Endothelial cell of umbilical vein (primary cell): ENCODE measurements at regions of chrX and their contacts with region 1.

Region 1: DNA sequence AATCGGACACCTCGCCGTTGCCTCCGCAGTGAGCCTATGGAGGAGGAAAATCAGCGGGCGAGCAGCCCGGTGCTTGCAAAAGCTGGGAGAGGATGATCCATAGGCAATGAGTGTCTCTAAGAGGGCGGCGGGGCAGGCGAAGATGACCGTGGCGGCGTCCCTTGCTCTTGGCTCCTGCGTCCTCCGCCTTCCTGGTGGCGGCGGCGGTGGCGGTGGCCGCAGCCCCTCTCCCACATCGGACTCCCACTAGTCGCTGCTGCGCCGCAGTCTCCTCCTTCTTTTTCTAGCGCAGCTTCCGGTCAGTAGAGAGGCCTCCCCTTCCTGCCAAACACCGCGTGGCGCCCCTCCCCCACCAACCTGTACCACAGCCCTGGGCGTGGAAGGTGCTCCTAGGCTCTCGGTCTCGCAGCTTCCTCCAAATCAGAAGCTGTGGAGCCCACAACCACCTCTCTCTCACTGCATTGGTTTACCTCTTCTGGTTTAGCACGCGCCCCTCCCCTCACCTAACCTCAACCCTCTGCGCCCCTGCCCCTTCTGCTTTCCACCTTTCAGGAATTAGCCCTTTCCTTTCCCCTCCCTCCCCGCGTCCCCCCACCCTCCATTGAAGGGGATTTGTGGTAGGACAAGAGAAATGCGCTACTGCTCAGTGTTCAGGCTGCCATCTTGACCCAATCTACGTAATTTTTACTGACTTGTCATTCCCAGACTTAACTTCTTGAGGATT is at the start of gene SPIN3:
- DNase-seq: peak; percentile 71
- H3K4me3 ChIP-seq: peak within 1 kb of the TSS; percentile 61 to 65 (median 62)
- H3K27ac ChIP-seq: no peak within 1 kb of the TSS
- H3K4me1 ChIP-seq: no peaks in the 10 kb centered on the region
- H3K27me3 ChIP-seq: no peaks in the 10 kb centered on the region
- CTCF ChIP-seq: no peak
- POLR2A ChIP-seq: peak; percentile 59
- total RNA-seq, gene SPIN3: 6.3 TPM in 2 replicates

Region 2: GRCh38 chrX:56744996-56745395 is 250.4 kb before region 1 on chrX:
- CTCF ChIA-PET with region 1: no interaction called
- POLR2A ChIA-PET with region 1: no interaction called
- dilution Hi-C with region 1: no loop called
- intact Hi-C with region 1: no loop called
- DNase-seq: peak; percentile 7
- H3K4me3 ChIP-seq: no peak overlapping the region
- H3K27ac ChIP-seq: no peak overlapping the region
- H3K4me1 ChIP-seq: no peaks in the 10 kb centered on the region
- H3K27me3 ChIP-seq: no peaks in the 10 kb centered on the region
- CTCF ChIP-seq: no peak
- POLR2A ChIP-seq: no peak

Region 3: DNA sequence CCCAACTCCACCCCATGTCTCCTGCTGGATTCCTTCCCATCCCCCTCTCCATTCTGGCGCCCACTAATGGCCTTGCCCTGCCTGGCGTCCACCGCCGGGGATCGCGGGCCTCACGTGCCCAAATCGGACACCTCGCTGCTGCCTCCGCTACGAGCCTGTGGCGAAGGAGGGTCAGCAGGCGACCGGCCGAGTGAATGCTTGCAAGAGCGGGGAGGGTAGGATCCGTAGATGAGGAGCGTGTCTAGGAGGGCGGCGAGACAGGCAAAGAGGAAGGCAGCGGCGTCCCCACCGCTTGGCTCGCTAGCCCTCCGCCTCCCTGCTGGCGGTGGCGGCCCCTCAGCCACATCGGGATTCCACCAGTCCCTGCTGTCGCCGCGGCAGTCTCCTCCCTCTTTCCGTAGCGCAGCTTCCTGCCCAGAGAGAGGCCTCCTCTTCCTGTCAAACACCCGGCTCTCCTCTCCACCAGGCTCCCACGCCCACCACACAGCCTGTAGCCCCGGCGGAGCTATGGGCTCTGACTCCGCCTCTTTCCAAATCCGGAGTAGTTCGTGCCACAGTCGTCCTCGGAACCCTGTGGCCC is 125.8 kb after region 1 on chrX and contains the start of gene SPIN2B:
- CTCF ChIA-PET with region 1: no interaction called
- POLR2A ChIA-PET with region 1: no interaction called
- dilution Hi-C with region 1: no loop called
- intact Hi-C with region 1: loop called (anchors 2 kb)
- DNase-seq: peak; percentile 85
- H3K4me3 ChIP-seq: peak within 1 kb of the TSS; percentile 55 to 76 (median 61)
- H3K27ac ChIP-seq: peak within 1 kb of the TSS; percentile 31
- H3K4me1 ChIP-seq: no peaks in the 10 kb centered on the region
- H3K27me3 ChIP-seq: no peaks in the 10 kb centered on the region
- CTCF ChIP-seq: no peak
- POLR2A ChIP-seq: peak; percentile 76
- total RNA-seq, gene SPIN2B: 8.8 and 10.3 TPM in 2 replicates

Region 4: DNA sequence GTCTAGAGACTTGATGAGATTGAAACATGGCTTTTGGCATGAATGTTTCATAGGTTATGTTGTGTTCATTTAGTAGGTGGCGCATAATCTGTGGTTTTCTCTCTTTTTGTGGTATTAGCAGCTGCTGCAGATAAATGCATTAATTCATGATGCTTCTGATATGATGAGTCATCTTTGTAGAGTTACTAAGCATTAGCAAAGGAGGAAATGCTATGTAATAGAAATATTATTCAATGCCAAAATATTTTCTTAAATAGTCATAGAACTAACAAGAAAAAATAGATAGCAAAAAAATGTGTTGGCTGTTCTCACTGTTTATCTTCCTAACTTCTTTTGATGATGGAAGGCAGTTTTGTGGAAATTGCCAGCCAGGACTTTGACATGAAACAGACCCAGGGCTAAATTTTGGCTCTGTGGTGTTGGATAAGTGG is 600.0 kb after region 1 on chrX:
- CTCF ChIA-PET with region 1: no interaction called
- POLR2A ChIA-PET with region 1: no interaction called
- dilution Hi-C with region 1: no loop called
- intact Hi-C with region 1: loop called (anchors 10 kb)
- DNase-seq: peak; percentile 61
- H3K4me3 ChIP-seq: peak overlapping the region in 1 of 3 experiments; percentile 71
- H3K27ac ChIP-seq: peak overlapping the region; percentile 81
- H3K4me1 ChIP-seq: peaks cover 33% of the 10 kb centered on the region
- H3K27me3 ChIP-seq: no peaks in the 10 kb centered on the region
- CTCF ChIP-seq: no peak
- POLR2A ChIP-seq: no peak